ENCODE measurements at regions of chr3 and their contacts with region 1.

Region 1: GRCh38 chr3:136075218-136075808 is 109.8 kb downstream of the PPP2R3A start:
- DNase-seq: peak; percentile 38 to 58
- H3K4me3 ChIP-seq: no peak overlapping the region
- H3K27ac ChIP-seq: no peak overlapping the region
- H3K4me1 ChIP-seq: no peaks in the 10 kb centered on the region
- H3K27me3 ChIP-seq: no peaks in the 10 kb centered on the region
- CTCF ChIP-seq: peak; percentile 95

Region 2: DNA sequence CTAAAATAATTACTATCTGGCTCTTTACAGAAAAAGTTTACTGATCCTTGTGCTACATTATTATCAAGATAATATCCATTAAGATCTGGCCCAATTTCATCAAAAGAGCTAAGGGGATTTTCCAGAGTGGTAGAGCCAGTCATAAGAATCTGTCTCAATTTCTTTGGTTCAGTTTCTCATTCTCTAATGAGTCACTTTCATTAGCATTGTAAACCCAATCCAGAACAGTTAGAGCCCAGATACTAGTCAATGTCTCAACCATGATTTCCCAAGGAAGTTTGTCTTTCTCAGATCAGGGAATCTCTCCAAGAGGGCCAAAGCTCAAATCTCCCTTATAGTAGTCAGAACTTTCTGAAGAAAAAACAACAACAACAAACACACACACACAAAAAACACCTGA is 240.8 kb before region 1 on chr3:
- CTCF ChIA-PET with region 1: no interaction called
- POLR2A ChIA-PET with region 1: no interaction called
- intact Hi-C with region 1: no loop called
- DNase-seq: no peak
- H3K4me3 ChIP-seq: no peak overlapping the region
- H3K27ac ChIP-seq: no peak overlapping the region
- H3K4me1 ChIP-seq: no peaks in the 10 kb centered on the region
- H3K27me3 ChIP-seq: no peaks in the 10 kb centered on the region
- CTCF ChIP-seq: no peak

Region 3: GRCh38 chr3:136250226-136250902 is 175.1 kb after region 1 on chr3 and contains the start of gene PCCB:
- CTCF ChIA-PET with region 1: no interaction called
- POLR2A ChIA-PET with region 1: no interaction called
- intact Hi-C with region 1: loop called (anchors 2 kb)
- DNase-seq: peak; percentile 90 to 97
- H3K4me3 ChIP-seq: peak within 1 kb of the TSS; percentile 51
- H3K27ac ChIP-seq: peak within 1 kb of the TSS; percentile 75
- H3K4me1 ChIP-seq: peaks cover 28% of the 10 kb centered on the region
- H3K27me3 ChIP-seq: no peaks in the 10 kb centered on the region
- CTCF ChIP-seq: peak; percentile 73
- total RNA-seq, gene PCCB: 46.8 and 49.3 TPM in 2 replicates

Region 4: DNA sequence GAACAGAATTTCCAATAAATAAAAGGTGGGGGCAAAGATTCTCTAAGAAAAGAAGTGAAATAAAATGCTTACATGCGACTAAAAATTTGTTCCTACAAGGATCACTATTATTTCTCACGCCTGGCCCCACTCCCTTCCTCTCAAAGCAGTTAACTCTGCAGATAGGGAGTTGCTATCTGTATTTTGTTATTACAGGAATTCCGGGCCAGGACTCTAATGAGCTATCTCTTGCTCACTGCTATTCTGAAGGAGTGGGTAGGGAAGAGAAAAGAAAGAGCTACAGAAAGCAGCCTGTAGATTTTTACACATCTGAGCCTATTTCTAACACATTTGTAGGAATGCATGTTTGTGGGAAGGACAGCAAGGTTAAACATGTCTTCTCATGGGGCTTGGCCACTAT is 315.3 kb after region 1 on chr3:
- CTCF ChIA-PET with region 1: no interaction called
- POLR2A ChIA-PET with region 1: no interaction called
- intact Hi-C with region 1: loop called (anchors 5 kb)
- DNase-seq: no peak
- H3K4me3 ChIP-seq: no peak overlapping the region
- H3K27ac ChIP-seq: no peak overlapping the region
- H3K4me1 ChIP-seq: no peaks in the 10 kb centered on the region
- H3K27me3 ChIP-seq: no peaks in the 10 kb centered on the region
- CTCF ChIP-seq: no peak

Region 5: GRCh38 chr3:137013955-137014688 is 938.8 kb after region 1 on chr3:
- CTCF ChIA-PET with region 1: no interaction called
- POLR2A ChIA-PET with region 1: no interaction called
- intact Hi-C with region 1: loop called (anchors 1 kb)
- DNase-seq: peak; percentile 66 to 88
- H3K4me3 ChIP-seq: no peak overlapping the region
- H3K27ac ChIP-seq: no peak overlapping the region
- H3K4me1 ChIP-seq: no peaks in the 10 kb centered on the region
- H3K27me3 ChIP-seq: no peaks in the 10 kb centered on the region
- CTCF ChIP-seq: peak; percentile 93

Region 6: GRCh38 chr3:137542049-137542448 is 1466.7 kb after region 1 on chr3:
- CTCF ChIA-PET with region 1: no interaction called
- POLR2A ChIA-PET with region 1: no interaction called
- intact Hi-C with region 1: no loop called
- DNase-seq: no peak
- H3K4me3 ChIP-seq: no peak overlapping the region
- H3K27ac ChIP-seq: no peak overlapping the region
- H3K4me1 ChIP-seq: no peaks in the 10 kb centered on the region
- H3K27me3 ChIP-seq: no peaks in the 10 kb centered on the region; the same call in 1 of the 2 replicates
- CTCF ChIP-seq: no peak

Region 7: GRCh38 chr3:137946345-137946973 is 1871.1 kb after region 1 on chr3:
- CTCF ChIA-PET with region 1: no interaction called
- POLR2A ChIA-PET with region 1: no interaction called
- intact Hi-C with region 1: loop called (anchors 5 kb)
- DNase-seq: peak; percentile 48 to 58
- H3K4me3 ChIP-seq: no peak overlapping the region
- H3K27ac ChIP-seq: no peak overlapping the region
- H3K4me1 ChIP-seq: no peaks in the 10 kb centered on the region
- H3K27me3 ChIP-seq: 0 out of 2 replicates have a peak, but pooled peaks cover 9% of the 10 kb centered on the region
- CTCF ChIP-seq: peak; percentile 88